Mucosa of descending colon (tissue), 3 donors: ENCODE measurements at regions of chr4 and their contacts with region 1.

Region 1: DNA sequence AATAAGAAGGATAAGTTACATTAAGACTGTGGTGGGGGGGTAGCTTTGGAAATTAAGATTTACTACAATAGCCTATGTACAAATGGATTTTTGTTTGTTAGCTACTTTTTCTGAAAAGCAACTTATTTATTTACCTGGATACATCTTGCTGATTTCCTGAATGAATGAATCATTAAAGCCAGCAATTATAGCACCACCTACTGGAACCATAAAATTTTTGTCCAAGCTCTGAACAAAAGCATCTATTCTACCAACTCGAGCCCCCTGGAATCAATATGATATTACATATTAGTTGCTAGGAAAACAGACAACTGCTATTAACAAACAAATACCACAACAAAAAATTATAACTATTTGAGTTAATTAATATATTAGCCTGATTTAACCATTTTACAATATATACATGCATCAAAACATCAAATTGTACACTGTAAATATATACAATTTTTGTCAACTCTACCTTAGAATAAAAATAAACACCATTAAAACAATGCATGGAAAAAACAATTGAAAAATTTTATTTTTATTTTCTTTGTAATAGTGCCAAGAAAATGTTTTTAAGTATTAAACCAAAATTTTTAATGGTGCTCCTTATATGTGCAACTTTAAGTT is 15.3 kb downstream of the SEPSECS start:
- DNase-seq: no peak
- ATAC-seq: no peak
- H3K4me3 ChIP-seq: no peak overlapping the region
- H3K4me1 ChIP-seq: no peaks in the 10 kb centered on the region
- CTCF ChIP-seq: no peak

Region 2: GRCh38 chr4:24979554-24979953 is 165.4 kb before region 1 on chr4:
- intact Hi-C with region 1: loop called in 1 of 2 experiments (anchors 10 kb)
- DNase-seq: peak in 1 of 3 donors; percentile 44
- ATAC-seq: peak; percentile 54
- H3K4me3 ChIP-seq: no peak overlapping the region
- H3K4me1 ChIP-seq: no peaks in the 10 kb centered on the region
- CTCF ChIP-seq: no peak

Region 3: DNA sequence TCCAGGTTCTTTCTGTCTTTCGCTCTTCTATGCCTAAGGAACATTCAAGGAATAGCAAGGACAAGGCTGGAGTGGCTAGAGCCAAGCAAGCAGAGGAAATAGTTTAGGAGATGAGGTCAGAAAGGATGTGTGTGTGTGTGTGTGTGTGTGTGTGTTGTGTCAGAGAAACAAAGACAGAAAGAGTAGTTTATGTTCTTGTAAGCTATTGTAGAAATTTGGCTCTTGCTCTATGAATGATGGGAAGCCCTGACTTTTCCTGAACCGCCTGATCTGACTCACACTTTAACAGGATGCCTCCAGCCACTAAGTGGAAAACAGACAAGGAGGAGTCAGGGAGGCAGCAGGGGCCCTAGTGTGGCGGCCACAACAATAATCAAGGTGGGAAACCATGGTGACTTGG is 154.0 kb before region 1 on chr4:
- intact Hi-C with region 1: no loop called
- DNase-seq: no peak
- ATAC-seq: no peak
- H3K4me3 ChIP-seq: no peak overlapping the region
- H3K4me1 ChIP-seq: no peaks in the 10 kb centered on the region
- CTCF ChIP-seq: no peak

Region 4: GRCh38 chr4:25702848-25703247 is 557.9 kb after region 1 on chr4:
- intact Hi-C with region 1: no loop called
- DNase-seq: no peak
- ATAC-seq: no peak
- H3K4me3 ChIP-seq: no peak overlapping the region
- H3K4me1 ChIP-seq: no peaks in the 10 kb centered on the region
- CTCF ChIP-seq: no peak